OCI-LY7 (cell line): ENCODE measurements at regions of chr11 and their contacts with region 1.

Region 1: DNA sequence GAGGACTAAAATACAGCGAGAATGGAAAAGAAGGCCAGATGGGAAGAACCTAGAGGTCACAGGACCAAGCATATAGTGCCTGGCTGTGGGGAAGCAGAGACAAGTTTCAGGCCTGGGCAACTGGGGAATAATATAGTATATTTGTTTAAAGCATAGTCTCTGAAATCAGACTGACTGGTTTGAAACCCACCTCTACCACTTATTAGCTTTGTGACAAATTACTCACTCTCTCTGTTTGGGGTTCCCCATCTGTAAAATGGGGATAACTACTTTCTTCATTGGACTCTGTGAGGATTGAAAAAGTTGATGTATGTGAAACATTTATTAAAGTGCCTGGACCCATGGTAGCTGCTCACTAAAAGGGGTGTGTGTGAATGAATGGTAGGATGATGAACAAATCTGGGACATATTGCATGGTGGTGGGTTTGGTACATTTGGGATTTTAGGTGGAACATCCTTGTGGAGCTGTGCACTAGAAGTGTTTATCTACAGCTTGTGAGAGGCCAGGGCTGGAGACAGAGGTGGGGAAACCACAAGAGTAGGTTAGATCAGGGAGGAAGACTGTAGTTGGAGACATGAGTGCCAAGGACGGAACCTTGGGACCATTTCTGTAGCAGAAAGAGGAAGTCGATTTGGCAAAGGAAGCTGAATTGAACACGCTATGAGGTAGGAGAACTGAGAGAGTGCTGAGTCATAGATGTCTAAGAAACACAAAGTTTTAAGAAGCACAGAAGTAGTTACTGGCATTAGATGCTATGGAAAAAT is 52.6 kb downstream of the SWAP70 start:
- DNase-seq: peak; percentile 78
- H3K4me3 ChIP-seq: peak overlapping the region; percentile 3
- H3K27ac ChIP-seq: peak overlapping the region; percentile 41
- H3K4me1 ChIP-seq: peaks cover 54% of the 10 kb centered on the region
- CTCF ChIP-seq: no peak

Region 2: GRCh38 chr11:9726321-9727022 is 10.0 kb after region 1 on chr11:
- CTCF ChIA-PET with region 1: no interaction called
- POLR2A ChIA-PET with region 1: interaction called, 12 read pairs
- intact Hi-C with region 1: no loop called
- DNase-seq: no peak
- H3K4me3 ChIP-seq: no peak overlapping the region
- H3K27ac ChIP-seq: peak overlapping the region; percentile 32
- H3K4me1 ChIP-seq: peaks cover 69% of the 10 kb centered on the region
- CTCF ChIP-seq: no peak

Region 3: GRCh38 chr11:9733212-9733611 is 16.8 kb after region 1 on chr11:
- CTCF ChIA-PET with region 1: interaction called, 3 read pairs
- POLR2A ChIA-PET with region 1: interaction called, 33 read pairs
- intact Hi-C with region 1: no loop called
- DNase-seq: no peak
- H3K4me3 ChIP-seq: no peak overlapping the region
- H3K27ac ChIP-seq: no peak overlapping the region
- H3K4me1 ChIP-seq: peaks cover 64% of the 10 kb centered on the region
- CTCF ChIP-seq: no peak

Region 4: DNA sequence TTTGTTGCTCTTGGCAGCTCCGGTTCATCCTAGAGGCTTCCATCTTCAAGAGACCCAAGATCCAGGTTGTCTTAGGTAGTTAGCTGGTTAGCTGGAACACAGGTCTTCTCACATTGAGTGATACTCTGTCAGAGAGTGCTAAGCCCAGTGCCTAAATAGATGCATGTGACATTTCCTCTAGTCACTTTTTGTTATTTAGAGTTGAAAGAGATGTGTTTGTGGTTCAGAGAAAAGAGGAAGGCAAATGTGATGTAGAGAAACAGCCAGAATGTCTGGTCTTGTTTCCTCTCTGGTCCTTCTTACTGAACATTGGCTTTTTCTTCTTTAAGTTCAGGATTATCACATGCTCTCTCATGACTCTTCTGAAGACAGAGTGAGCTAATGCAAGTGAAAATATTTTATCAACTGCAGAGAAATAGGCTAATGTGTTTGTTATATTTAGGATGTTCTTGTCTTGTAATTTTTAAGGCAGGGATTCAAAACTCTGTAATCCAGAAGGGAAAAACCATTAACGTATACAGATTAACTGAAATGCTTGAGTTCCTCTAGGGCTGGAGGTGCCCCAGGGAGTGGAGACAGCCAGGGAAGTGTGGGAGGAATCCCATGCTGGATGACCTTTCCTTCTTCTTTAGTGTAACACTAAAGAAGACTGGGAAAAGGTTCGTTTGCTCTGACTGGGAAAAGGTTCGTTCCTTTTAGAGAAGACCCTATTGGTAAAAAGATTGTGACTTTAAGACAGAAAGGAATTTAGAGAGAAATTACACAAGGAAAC is 22.9 kb after region 1 on chr11:
- CTCF ChIA-PET with region 1: interaction called, 3 read pairs
- POLR2A ChIA-PET with region 1: interaction called, 33 read pairs
- intact Hi-C with region 1: no loop called
- DNase-seq: peak; percentile 81
- H3K4me3 ChIP-seq: peak overlapping the region; percentile 47
- H3K27ac ChIP-seq: peak overlapping the region; percentile 94
- H3K4me1 ChIP-seq: peaks cover 72% of the 10 kb centered on the region
- CTCF ChIP-seq: no peak

Region 5: DNA sequence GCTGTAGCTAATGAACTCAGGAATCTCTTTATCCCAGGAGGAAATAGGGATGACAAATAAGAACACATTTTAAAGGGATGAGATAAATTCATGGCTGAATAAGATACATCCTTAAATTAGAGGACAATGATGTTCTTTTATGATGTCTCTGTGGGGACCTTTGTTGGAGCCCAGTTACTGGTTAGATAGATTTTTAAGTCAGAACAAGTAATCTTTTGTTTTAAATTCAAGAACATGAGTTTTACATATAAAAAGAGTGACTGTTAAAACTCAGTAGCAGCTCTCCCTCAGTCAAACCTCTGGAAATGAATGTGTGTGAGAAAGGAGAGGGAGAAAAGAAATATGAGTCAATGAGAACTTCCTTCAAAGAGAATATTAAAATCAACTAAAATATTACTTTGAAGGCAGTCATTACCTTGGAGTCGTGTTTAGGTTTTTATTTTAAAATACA is 189.1 kb after region 1 on chr11:
- CTCF ChIA-PET with region 1: no interaction called
- POLR2A ChIA-PET with region 1: no interaction called
- intact Hi-C with region 1: no loop called
- DNase-seq: no peak
- H3K4me3 ChIP-seq: no peak overlapping the region
- H3K27ac ChIP-seq: no peak overlapping the region
- H3K4me1 ChIP-seq: no peaks in the 10 kb centered on the region
- CTCF ChIP-seq: no peak